AG04449 (cell line): ENCODE measurements at regions of chr5 and their contacts with region 1.

Region 1: GRCh38 chr5:172714491-172715421 is 56.2 kb downstream of the DUSP1 start:
- DNase-seq: no peak
- H3K4me3 ChIP-seq: no peak overlapping the region
- CTCF ChIP-seq: peak; percentile 90

Region 2: GRCh38 chr5:172479044-172479783 is 235.5 kb before region 1 on chr5:
- CTCF ChIA-PET with region 1: interaction called, 20 read pairs
- POLR2A ChIA-PET with region 1: no interaction called
- DNase-seq: peak; percentile 36
- H3K4me3 ChIP-seq: no peak overlapping the region
- CTCF ChIP-seq: peak; percentile 89

Region 3: GRCh38 chr5:172733131-172733973 is 18.6 kb after region 1 on chr5:
- CTCF ChIA-PET with region 1: interaction called, 39 read pairs
- POLR2A ChIA-PET with region 1: interaction called, 3 read pairs
- DNase-seq: peak; percentile 98
- H3K4me3 ChIP-seq: peak overlapping the region; percentile 36
- CTCF ChIP-seq: no peak

Region 4: GRCh38 chr5:172764849-172765765 is 50.4 kb after region 1 on chr5:
- CTCF ChIA-PET with region 1: interaction called, 46 read pairs
- POLR2A ChIA-PET with region 1: interaction called, 20 read pairs
- DNase-seq: peak; percentile 98
- H3K4me3 ChIP-seq: peak overlapping the region; percentile 54
- CTCF ChIP-seq: no peak

Region 5: DNA sequence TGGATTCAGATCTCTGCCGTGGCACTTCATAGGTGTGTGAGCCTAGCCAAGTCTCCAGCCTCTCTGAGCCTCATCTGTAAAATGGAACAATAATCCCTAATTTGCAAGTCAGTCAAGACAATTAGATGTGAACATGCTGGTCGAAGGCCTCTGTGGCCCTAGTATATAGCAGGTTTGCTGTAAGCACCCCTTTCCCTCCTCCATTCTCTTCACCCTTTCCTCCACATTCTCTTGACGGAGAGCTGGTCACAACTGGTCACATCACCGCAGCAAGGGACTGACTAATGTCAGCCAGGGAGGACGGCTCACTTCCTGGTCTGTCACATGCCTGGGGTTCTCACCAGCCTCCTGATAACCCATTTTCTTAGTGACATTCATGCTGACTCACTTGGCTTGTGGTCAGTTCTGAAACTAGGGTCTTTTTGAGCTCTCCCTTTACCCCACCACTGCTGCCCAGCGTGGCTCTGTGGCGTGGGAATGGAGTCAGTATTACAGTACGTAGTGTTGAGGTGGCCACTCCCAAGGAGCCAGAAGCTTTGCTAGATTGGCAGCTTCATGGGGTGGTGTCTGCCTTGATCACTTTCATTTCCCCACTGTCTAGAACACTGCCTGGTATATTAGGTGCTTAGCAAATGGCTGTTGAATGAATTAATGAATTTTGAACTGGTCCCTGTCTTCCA is 167.1 kb after region 1 on chr5:
- CTCF ChIA-PET with region 1: interaction called, 13 read pairs
- POLR2A ChIA-PET with region 1: no interaction called
- DNase-seq: no peak
- H3K4me3 ChIP-seq: no peak overlapping the region
- CTCF ChIP-seq: no peak

Region 6: GRCh38 chr5:172910828-172911627 is 196.3 kb after region 1 on chr5:
- CTCF ChIA-PET with region 1: interaction called, 61 read pairs
- POLR2A ChIA-PET with region 1: no interaction called
- DNase-seq: no peak
- H3K4me3 ChIP-seq: no peak overlapping the region
- CTCF ChIP-seq: peak; percentile 38

Region 7: DNA sequence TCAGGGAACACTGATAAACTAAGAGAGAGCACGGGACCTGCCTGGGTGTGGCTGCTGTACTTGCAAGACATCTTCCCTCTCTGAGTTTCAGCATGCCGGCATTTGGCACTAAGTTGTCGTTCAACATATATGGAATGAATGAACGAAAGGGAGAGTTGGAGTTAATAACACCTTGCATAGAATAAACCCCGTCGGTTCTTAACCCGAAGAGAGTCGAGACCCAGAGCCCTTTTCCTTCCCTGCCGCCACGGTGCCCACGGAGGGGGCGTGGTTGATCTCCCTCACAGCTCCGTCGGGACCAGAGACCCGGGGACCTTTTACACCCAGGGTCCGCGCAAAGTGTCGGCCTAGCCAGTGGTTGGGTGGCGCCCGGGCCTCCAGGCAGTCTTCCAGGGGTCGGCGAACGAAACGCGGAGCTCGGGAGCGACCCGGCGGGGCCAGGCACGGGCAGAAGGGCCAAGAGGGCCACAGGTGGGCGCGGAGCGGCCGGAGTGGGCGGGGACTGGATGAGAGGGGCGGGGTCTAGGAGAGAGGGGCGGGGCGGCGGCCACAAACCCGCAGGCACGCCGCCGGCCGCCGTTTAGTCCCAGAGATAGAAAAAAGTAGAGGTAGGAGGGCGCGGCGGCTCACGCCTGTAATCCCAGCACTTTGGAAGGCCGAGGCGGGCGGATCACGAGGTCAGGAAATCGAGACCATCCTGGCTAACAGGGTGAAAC is 243.7 kb after region 1 on chr5:
- CTCF ChIA-PET with region 1: interaction called, 32 read pairs
- POLR2A ChIA-PET with region 1: interaction called, 8 read pairs
- DNase-seq: no peak
- H3K4me3 ChIP-seq: peak overlapping the region; percentile 51
- CTCF ChIP-seq: no peak